ENCODE measurements at regions of chr4 and their contacts with region 1.

Region 1: GRCh38 chr4:161457311-161457710 is 706.5 kb downstream of the FSTL5 start:
- DNase-seq: no peak
- ATAC-seq: no peak
- H3K4me3 ChIP-seq: no peak overlapping the region
- H3K27ac ChIP-seq: no peak overlapping the region
- H3K4me1 ChIP-seq: no peaks in the 10 kb centered on the region
- H3K27me3 ChIP-seq: no peaks in the 10 kb centered on the region
- CTCF ChIP-seq: no peak

Region 2: DNA sequence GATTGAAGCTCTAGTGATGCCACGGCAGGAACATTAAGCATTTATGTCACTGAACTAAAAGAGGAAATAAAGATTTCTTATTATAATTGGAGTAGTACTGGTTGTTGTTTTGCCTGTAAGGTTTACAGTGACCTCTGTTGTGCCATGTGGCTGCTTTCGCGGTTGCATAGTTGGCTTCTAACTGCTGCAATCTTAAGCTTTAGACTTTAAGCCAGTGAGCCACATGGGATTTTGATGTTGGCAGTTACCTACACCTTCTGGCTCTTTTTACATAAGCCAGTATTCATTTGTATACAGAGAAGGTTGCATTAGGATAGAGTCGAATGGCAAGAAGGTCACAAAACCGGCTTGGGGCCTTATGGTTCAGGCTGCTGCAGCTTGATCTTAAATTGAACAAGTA is 1042.8 kb before region 1 on chr4:
- CTCF ChIA-PET with region 1: no interaction called
- POLR2A ChIA-PET with region 1: interaction called, 20 read pairs
- in situ Hi-C with region 1: no loop called
- intact Hi-C with region 1: no loop called
- DNase-seq: no peak
- ATAC-seq: no peak
- H3K4me3 ChIP-seq: no peak overlapping the region
- H3K27ac ChIP-seq: no peak overlapping the region
- H3K4me1 ChIP-seq: no peaks in the 10 kb centered on the region
- H3K27me3 ChIP-seq: no peaks in the 10 kb centered on the region
- CTCF ChIP-seq: no peak

Region 3: GRCh38 chr4:161428180-161428965 is 28.9 kb before region 1 on chr4:
- CTCF ChIA-PET with region 1: no interaction called
- POLR2A ChIA-PET with region 1: no interaction called
- in situ Hi-C with region 1: no loop called
- intact Hi-C with region 1: no loop called
- DNase-seq: no peak
- ATAC-seq: no peak
- H3K4me3 ChIP-seq: no peak overlapping the region
- H3K27ac ChIP-seq: no peak overlapping the region
- H3K4me1 ChIP-seq: no peaks in the 10 kb centered on the region
- H3K27me3 ChIP-seq: no peaks in the 10 kb centered on the region
- CTCF ChIP-seq: no peak

Measured in Panc1 (cell line).